ENCODE measurements at regions of chr7 and their contacts with region 1.

Region 1: DNA sequence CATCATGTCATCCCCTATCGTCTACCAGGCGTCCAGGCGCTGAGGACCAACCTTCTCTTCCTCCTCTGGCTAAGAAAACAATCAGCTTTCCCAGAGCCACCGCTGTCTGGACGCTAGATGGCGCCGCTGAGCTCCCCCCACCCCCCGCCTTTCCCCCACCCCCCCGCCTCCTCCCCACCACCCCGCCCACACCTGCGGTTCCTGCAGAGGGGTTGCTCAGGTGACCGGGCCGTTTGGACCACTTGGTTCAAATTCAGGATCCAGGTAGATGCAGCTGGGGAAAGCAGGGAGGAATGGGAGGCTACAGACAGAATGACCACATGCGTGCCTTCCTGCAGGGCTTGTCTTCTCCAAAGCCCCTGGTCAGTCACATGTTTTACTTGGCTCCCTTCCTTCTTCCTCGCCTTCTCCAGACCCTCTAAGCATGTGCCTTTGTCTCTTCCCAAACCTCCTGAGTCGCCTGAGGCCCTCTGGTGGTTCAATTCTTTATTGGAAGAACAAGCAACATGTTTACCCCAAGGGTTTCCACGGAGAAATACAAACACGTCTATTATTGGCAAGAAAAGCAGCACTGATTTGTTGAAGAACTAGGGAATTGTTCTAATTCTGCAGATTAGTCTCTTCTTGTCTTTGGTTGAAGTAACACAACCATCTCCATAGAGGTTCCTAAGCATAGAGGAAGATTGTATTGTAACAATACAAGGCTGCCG is 24.7 kb downstream of the AOC1 start:
- DNase-seq: no peak
- ATAC-seq: peak; percentile 73
- H3K4me3 ChIP-seq: no peak overlapping the region
- H3K27ac ChIP-seq: no peak overlapping the region
- H3K4me1 ChIP-seq: no peaks in the 10 kb centered on the region
- H3K27me3 ChIP-seq: no peaks in the 10 kb centered on the region
- CTCF ChIP-seq: peak; percentile 28 to 62 (median 48); a peak in 4 of 6 replicates
- EP300 ChIP-seq: no peak
- POLR2A ChIP-seq: no peak
- RAD21 ChIP-seq: no peak

Region 2: DNA sequence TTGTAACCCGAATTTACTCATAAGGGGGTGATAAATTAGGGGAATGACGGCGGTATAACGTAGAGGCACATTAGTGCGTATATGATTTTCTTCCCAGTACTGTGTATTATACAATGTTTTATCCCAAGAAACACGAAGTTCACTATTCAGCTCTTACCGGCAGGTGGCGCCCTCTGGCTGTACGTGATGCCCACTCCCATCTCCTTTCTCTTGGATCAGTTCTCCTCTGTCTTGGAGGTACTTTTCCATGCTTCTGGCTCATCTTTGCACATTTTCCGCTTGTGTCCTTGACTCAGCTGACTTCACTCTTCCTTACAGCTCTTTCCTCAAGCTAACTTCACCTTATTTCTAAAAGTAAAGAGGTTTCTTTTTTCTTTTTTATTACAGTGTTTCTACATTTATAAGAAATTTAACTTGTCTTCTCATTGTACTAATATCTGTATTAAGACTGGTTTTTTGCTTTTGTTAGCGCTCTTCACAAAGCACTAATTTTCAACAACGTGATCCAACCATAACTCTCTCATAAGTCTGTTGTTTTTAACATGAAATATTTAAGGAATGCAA is 98.2 kb before region 1 on chr7:
- CTCF ChIA-PET with region 1: interaction called, 70 read pairs
- POLR2A ChIA-PET with region 1: no interaction called
- RAD21 ChIA-PET with region 1: interaction called, 8 read pairs
- SMC1A ChIA-PET with region 1: interaction called, 52 read pairs
- in situ Hi-C with region 1: no loop called
- intact Hi-C with region 1: loop called (anchors 1 kb)
- DNase-seq: no peak
- ATAC-seq: peak; percentile 86
- H3K4me3 ChIP-seq: no peak overlapping the region
- H3K27ac ChIP-seq: no peak overlapping the region
- H3K4me1 ChIP-seq: 0 out of 2 replicates have a peak, but pooled peaks cover 3% of the 10 kb centered on the region
- H3K27me3 ChIP-seq: no peaks in the 10 kb centered on the region
- CTCF ChIP-seq: peak; percentile 87 to 92 (median 88)
- EP300 ChIP-seq: no peak
- POLR2A ChIP-seq: no peak
- RAD21 ChIP-seq: peak; percentile 77

Region 3: GRCh38 chr7:150787321-150788281 is 89.4 kb before region 1 on chr7:
- CTCF ChIA-PET with region 1: interaction called, 70 read pairs
- POLR2A ChIA-PET with region 1: no interaction called
- RAD21 ChIA-PET with region 1: interaction called, 5 read pairs
- SMC1A ChIA-PET with region 1: interaction called, 52 read pairs
- in situ Hi-C with region 1: no loop called
- intact Hi-C with region 1: no loop called
- DNase-seq: peak; percentile 30
- ATAC-seq: peak; percentile 59
- H3K4me3 ChIP-seq: no peak overlapping the region
- H3K27ac ChIP-seq: no peak overlapping the region
- H3K4me1 ChIP-seq: peaks cover 17% of the 10 kb centered on the region
- H3K27me3 ChIP-seq: peaks cover 0 to 2% of the 10 kb centered on the region in 2 experiments; a peak in 1 of 4 replicates
- CTCF ChIP-seq: no peak
- EP300 ChIP-seq: no peak
- POLR2A ChIP-seq: no peak
- RAD21 ChIP-seq: no peak

Region 4: DNA sequence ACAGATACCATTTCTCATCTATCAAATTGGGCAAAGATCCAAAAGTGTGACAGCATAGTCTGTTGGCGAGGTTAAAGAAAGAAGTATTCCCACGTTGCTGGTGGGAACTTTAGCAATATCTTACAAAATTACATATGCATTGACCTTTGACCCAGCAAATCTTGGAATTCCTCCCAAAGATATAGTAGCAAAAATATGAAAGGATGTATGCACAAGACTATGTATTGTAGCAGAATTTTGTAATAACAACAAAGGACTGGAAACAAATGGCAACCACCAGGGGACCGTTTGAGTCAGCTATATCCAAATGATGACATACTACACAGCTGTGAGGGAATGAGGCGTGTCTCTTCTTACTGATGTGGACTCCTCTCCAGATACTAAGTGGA is 51.0 kb after region 1 on chr7:
- CTCF ChIA-PET with region 1: no interaction called
- POLR2A ChIA-PET with region 1: no interaction called
- RAD21 ChIA-PET with region 1: no interaction called
- SMC1A ChIA-PET with region 1: no interaction called
- in situ Hi-C with region 1: no loop called
- intact Hi-C with region 1: no loop called
- DNase-seq: no peak
- ATAC-seq: no peak
- H3K4me3 ChIP-seq: no peak overlapping the region
- H3K27ac ChIP-seq: no peak overlapping the region
- H3K4me1 ChIP-seq: no peaks in the 10 kb centered on the region
- H3K27me3 ChIP-seq: peaks cover 0 to 2% of the 10 kb centered on the region in 2 experiments; a peak in 2 of 4 replicates
- CTCF ChIP-seq: no peak
- EP300 ChIP-seq: no peak
- POLR2A ChIP-seq: no peak
- RAD21 ChIP-seq: no peak

Region 5: GRCh38 chr7:150945833-150946420 is 69.0 kb after region 1 on chr7:
- CTCF ChIA-PET with region 1: no interaction called
- POLR2A ChIA-PET with region 1: no interaction called
- RAD21 ChIA-PET with region 1: no interaction called
- SMC1A ChIA-PET with region 1: no interaction called
- in situ Hi-C with region 1: no loop called
- intact Hi-C with region 1: no loop called
- DNase-seq: no peak
- ATAC-seq: no peak
- H3K4me3 ChIP-seq: no peak overlapping the region
- H3K27ac ChIP-seq: no peak overlapping the region
- H3K4me1 ChIP-seq: no peaks in the 10 kb centered on the region
- H3K27me3 ChIP-seq: peaks cover 0 to 2% of the 10 kb centered on the region in 2 experiments; a peak in 2 of 4 replicates
- CTCF ChIP-seq: no peak
- EP300 ChIP-seq: no peak
- POLR2A ChIP-seq: no peak
- RAD21 ChIP-seq: no peak